ENCODE measurements at regions of chr5 and their contacts with region 1.

Region 1: GRCh38 chr5:107389130-107389774 is 281.5 kb downstream of the EFNA5 start:
- DNase-seq: peak; percentile 23
- H3K4me3 Mint-ChIP-seq: peak overlapping the region; percentile 51
- H3K27ac Mint-ChIP-seq: peak overlapping the region; percentile 77
- H3K4me1 Mint-ChIP-seq: peaks cover 27% of the 10 kb centered on the region
- H3K27me3 Mint-ChIP-seq: peaks cover 6% of the 10 kb centered on the region

Region 2: GRCh38 chr5:107263387-107264018 is 125.7 kb before region 1 on chr5:
- intact Hi-C with region 1: loop called (anchors 2 kb)
- DNase-seq: no peak
- H3K4me3 Mint-ChIP-seq: no peak overlapping the region
- H3K27ac Mint-ChIP-seq: peak overlapping the region; percentile 21
- H3K4me1 Mint-ChIP-seq: peaks cover 5% of the 10 kb centered on the region
- H3K27me3 Mint-ChIP-seq: no peaks in the 10 kb centered on the region

Region 3: DNA sequence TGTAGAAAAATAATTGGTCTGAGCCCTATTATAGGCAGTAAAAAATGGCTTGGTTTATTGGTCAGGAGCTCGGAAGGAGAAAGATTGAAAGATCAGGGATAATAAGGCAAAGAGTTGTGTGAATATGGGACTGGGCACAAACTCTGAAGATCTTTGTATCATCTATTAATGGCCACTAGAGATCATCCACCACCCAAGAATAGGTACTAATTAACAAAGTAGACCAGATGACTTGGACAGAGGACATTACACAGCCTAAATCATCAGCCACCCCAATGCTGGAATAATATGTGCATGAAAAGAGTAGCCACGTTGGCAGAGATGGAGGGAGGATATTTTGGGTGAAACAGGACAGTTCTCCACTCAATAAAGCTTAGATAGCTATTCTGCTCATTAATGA is 82.7 kb before region 1 on chr5:
- intact Hi-C with region 1: loop called (anchors 5 kb)
- DNase-seq: no peak
- H3K4me3 Mint-ChIP-seq: no peak overlapping the region
- H3K27ac Mint-ChIP-seq: no peak overlapping the region
- H3K4me1 Mint-ChIP-seq: peaks cover 11% of the 10 kb centered on the region
- H3K27me3 Mint-ChIP-seq: peaks cover 12% of the 10 kb centered on the region

Region 4: DNA sequence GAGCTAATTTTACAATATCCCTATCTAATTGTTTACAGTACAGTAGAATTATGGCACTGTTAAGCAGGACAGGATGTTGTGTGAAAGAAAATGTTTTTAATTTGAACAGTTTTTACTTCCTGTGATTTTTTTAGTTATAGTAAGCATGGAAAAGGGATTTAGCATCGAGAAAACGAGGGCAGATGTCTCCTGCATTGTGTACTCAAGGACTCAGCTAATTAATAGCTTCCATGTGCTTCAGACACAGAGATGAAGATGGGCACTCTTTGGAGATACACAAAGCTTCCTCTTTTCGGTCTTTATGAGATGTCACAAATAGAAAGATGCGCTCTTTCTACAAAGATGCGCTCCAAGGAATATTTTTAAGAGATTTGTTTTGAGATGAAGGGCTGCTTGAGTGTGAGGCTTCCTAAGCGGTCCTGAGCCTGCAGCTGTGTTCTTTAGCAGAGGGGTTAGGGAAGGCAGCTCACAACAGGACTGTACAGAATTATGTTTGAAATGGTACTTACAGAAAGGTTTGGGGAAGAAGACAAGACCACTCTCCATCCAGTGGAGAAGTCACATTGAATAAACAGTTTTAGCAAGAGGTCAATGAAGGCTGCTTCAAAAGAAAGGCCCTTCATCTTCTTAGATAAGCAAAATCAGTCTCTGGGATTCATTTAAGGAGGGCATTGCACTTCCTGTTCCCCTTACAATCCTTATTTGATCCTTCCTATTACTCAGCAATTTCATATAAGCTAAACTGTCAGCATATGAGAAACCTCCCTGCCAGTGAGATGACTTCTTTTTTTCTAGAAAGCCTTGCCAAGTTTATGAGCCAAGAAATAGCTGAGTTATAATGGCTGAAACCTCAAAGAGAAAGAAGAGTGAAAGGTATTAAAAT is 30.0 kb before region 1 on chr5:
- intact Hi-C with region 1: no loop called
- DNase-seq: no peak
- H3K4me3 Mint-ChIP-seq: no peak overlapping the region
- H3K27ac Mint-ChIP-seq: no peak overlapping the region
- H3K4me1 Mint-ChIP-seq: no peaks in the 10 kb centered on the region
- H3K27me3 Mint-ChIP-seq: peaks cover 4% of the 10 kb centered on the region

Region 5: GRCh38 chr5:107476783-107477182 is 87.5 kb after region 1 on chr5:
- intact Hi-C with region 1: loop called (anchors 2 kb)
- DNase-seq: peak; percentile 11
- H3K4me3 Mint-ChIP-seq: no peak overlapping the region
- H3K27ac Mint-ChIP-seq: no peak overlapping the region
- H3K4me1 Mint-ChIP-seq: peaks cover 5% of the 10 kb centered on the region
- H3K27me3 Mint-ChIP-seq: peaks cover 10% of the 10 kb centered on the region

Region 6: GRCh38 chr5:107501965-107502675 is 112.9 kb after region 1 on chr5:
- intact Hi-C with region 1: loop called (anchors 1 kb)
- DNase-seq: no peak
- H3K4me3 Mint-ChIP-seq: peak overlapping the region; percentile 34
- H3K27ac Mint-ChIP-seq: peak overlapping the region; percentile 44
- H3K4me1 Mint-ChIP-seq: peaks cover 13% of the 10 kb centered on the region
- H3K27me3 Mint-ChIP-seq: peaks cover 19% of the 10 kb centered on the region

Region 7: DNA sequence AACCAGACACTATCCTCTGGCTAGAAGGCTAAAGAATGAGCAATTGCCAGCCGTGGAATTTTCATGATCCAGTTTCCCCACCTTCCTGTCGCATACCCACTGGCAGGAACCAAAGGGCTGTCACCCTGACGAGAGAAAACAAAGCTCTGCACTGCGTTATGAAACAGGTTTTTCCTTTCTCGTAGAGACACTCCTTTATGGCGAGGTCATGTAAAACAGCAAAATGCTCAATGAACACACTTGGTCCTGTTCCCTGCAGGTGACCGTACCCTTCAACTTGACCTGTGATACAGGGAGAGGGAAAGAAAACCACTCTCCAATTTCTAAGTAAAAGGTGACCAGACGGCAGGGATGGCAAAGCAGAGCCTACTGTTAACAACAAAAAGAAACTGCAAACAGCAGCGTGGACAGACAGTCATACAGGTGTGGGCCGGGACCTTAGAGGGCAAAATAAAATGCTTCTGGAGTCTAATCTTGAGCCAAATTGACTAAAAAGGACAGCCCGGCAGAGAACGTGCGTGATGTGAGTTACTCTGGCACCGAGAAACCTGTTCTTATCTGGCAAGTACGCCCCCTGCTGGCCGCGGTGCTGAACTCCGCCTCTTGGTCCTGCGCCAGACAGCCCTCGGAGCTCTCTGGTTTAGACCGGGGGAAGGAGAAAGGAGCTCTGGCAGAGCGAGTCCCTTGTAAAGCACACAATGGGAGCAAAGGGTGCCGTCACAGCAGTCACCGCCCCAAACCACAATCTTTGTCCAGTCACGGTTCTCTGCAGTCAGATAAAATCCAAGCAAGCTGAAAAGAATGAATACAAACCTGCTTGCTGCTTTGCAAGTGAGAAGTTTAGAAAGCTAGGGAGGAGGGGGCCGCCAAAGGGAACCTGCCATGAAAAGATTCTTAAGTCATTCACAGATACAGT is 182.6 kb after region 1 on chr5:
- intact Hi-C with region 1: loop called (anchors 1 kb)
- DNase-seq: peak; percentile 76
- H3K4me3 Mint-ChIP-seq: peak overlapping the region; percentile 56
- H3K27ac Mint-ChIP-seq: no peak overlapping the region
- H3K4me1 Mint-ChIP-seq: peaks cover 18% of the 10 kb centered on the region
- H3K27me3 Mint-ChIP-seq: peaks cover 36% of the 10 kb centered on the region

Region 8: GRCh38 chr5:107589520-107590193 is 200.4 kb after region 1 on chr5:
- intact Hi-C with region 1: no loop called
- DNase-seq: no peak
- H3K4me3 Mint-ChIP-seq: no peak overlapping the region
- H3K27ac Mint-ChIP-seq: no peak overlapping the region
- H3K4me1 Mint-ChIP-seq: no peaks in the 10 kb centered on the region
- H3K27me3 Mint-ChIP-seq: no peaks in the 10 kb centered on the region